HepG2 (cell line): ENCODE measurements at regions of chr11 and their contacts with region 1.

Region 1: DNA sequence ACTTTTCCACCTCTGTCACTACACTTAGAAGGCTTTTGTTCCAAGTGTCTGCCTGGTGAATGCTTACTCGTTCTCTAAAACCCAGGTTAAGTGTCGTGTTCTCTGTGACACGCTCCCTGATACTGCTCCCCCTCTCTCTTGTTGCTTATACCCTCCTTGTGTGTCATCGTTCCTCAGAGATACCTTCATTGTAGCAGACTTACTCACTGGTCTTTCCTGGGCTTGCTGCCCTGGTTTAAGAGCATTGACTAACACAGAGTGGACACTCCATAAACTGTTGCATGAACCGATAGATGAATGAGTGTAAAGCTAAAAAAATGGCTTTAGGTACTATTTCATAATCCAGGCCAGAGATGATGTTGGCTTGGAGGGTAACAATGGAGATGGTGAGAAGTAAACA is 171.3 kb downstream of the GRIK4 start:
- DNase-seq: no peak
- ATAC-seq: no peak
- H3K4me3 ChIP-seq: no peak overlapping the region
- H3K27ac ChIP-seq: no peak overlapping the region
- H3K4me1 ChIP-seq: peaks cover 12% of the 10 kb centered on the region; the same call in 1 of the 2 replicates
- H3K27me3 ChIP-seq: no peaks in the 10 kb centered on the region
- CTCF ChIP-seq: no peak
- EP300 ChIP-seq: no peak
- POLR2A ChIP-seq: no peak
- RAD21 ChIP-seq: no peak

Region 2: GRCh38 chr11:120660024-120660565 is 22.8 kb before region 1 on chr11:
- CTCF ChIA-PET with region 1: interaction called, 13 read pairs
- POLR2A ChIA-PET with region 1: no interaction called
- in situ Hi-C with region 1: no loop called
- intact Hi-C with region 1: loop called (anchors 1 kb)
- DNase-seq: peak; percentile 53
- ATAC-seq: peak; percentile 83
- H3K4me3 ChIP-seq: no peak overlapping the region
- H3K27ac ChIP-seq: no peak overlapping the region
- H3K4me1 ChIP-seq: 0 out of 2 replicates have a peak, but pooled peaks cover 4% of the 10 kb centered on the region
- H3K27me3 ChIP-seq: no peaks in the 10 kb centered on the region; a peak in 3 of 5 replicates
- CTCF ChIP-seq: peak; percentile 74
- EP300 ChIP-seq: no peak
- POLR2A ChIP-seq: no peak
- RAD21 ChIP-seq: peak; percentile 73

Region 3: DNA sequence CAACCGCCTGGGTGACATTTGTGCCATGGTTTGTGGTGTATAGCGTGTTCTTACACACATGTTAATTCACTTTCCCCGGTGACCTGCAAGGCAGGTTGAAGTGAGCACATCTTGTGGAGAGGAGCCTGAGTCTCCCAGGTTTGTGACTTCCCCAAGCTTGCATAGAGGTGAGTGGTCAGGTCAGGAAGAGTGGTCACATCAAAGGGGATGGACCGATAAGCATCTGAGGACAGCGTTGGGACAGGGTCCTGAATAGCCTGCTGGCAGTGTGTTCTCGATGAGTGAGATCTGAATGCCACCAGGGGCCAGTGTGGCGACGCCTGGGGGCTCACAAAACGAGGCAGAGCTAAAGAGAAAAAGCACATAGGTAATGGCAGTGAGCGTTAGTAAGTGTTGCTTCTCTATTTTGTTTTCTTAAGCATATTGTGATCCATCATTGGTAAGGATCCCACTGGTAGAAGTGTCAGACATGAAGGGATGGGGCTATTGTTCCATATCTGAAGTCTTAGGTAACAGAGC is 16.7 kb before region 1 on chr11:
- CTCF ChIA-PET with region 1: interaction called, 13 read pairs
- POLR2A ChIA-PET with region 1: interaction called, 3 read pairs
- in situ Hi-C with region 1: no loop called
- intact Hi-C with region 1: loop called (anchors 1 kb)
- DNase-seq: peak; percentile 23
- ATAC-seq: peak; percentile 77
- H3K4me3 ChIP-seq: no peak overlapping the region
- H3K27ac ChIP-seq: no peak overlapping the region
- H3K4me1 ChIP-seq: 0 out of 2 replicates have a peak, but pooled peaks cover 4% of the 10 kb centered on the region
- H3K27me3 ChIP-seq: no peaks in the 10 kb centered on the region; a peak in 1 of 5 replicates
- CTCF ChIP-seq: peak; percentile 73
- EP300 ChIP-seq: no peak
- POLR2A ChIP-seq: no peak
- RAD21 ChIP-seq: peak; percentile 35; the same call in 1 of the 2 replicates

Region 4: GRCh38 chr11:120952461-120953434 is 269.9 kb after region 1 on chr11:
- CTCF ChIA-PET with region 1: no interaction called
- POLR2A ChIA-PET with region 1: no interaction called
- in situ Hi-C with region 1: loop called (anchors 10 kb)
- intact Hi-C with region 1: no loop called
- DNase-seq: peak; percentile 64
- ATAC-seq: peak; percentile 91
- H3K4me3 ChIP-seq: peak overlapping the region in 1 of 3 experiments; percentile 17; a peak in 1 of 6 replicates
- H3K27ac ChIP-seq: no peak overlapping the region
- H3K4me1 ChIP-seq: no peaks in the 10 kb centered on the region
- H3K27me3 ChIP-seq: peaks cover 5 to 7% of the 10 kb centered on the region in 2 experiments; a peak in 2 of 5 replicates
- CTCF ChIP-seq: peak; percentile 80
- EP300 ChIP-seq: no peak
- POLR2A ChIP-seq: no peak
- RAD21 ChIP-seq: peak; percentile 57